Posterior cingulate gyrus (tissue), 11 donors: ENCODE measurements at regions of chr5 and their contacts with region 1.

Region 1: GRCh38 chr5:132777209-132778069 is at the start of gene SEPTIN8:
- DNase-seq: peak in 9 of 10 donors; percentile 57 to 96 (median 67)

Region 2: DNA sequence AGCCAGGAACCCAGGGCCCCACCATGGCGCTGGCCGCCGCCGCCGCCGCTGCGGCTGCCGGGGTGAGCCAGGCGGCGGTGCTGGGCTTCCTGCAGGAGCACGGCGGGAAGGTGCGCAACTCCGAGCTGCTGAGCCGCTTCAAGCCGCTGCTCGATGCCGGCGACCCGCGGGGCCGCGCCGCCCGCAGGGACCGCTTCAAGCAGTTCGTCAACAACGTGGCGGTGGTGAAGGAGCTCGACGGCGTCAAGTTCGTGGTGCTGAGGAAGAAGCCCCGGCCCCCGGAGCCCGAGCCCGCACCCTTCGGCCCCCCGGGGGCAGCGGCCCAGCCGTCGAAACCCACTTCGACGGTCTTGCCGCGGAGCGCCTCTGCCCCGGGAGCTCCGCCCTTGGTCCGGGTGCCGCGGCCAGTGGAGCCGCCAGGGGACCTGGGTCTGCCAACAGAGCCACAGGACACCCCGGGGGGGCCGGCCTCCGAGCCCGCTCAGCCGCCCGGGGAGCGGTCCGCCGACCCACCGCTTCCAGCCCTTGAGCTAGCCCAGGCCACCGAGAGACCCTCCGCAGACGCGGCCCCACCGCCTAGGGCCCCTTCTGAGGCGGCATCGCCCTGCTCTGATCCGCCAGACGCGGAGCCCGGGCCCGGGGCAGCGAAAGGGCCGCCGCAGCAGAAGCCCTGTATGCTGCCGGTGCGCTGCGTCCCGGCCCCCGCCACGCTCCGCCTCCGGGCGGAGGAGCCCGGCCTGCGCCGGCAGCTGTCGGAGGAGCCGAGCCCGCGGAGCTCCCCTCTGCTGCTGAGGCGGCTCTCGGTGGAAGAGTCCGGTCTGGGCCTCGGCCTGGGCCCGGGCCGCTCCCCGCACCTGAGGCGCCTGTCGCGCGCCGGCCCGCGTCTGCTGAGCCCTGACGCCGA is 36.4 kb after region 1 on chr5:
- intact Hi-C with region 1: loop called (anchors 5 kb)
- DNase-seq: peak in 7 of 10 donors; percentile 48 to 95 (median 81)